PC-9 (cell line): ENCODE measurements at regions of chr1 and their contacts with region 1.

Region 1: GRCh38 chr1:23959041-23959460 is 577 bp upstream of the PNRC2 start:
- DNase-seq: peak; percentile 75 to 80
- H3K4me3 ChIP-seq: peak overlapping the region; percentile 97
- H3K27ac ChIP-seq: peak overlapping the region; percentile 91
- H3K4me1 ChIP-seq: peaks cover 48% of the 10 kb centered on the region
- H3K27me3 ChIP-seq: no peaks in the 10 kb centered on the region
- CTCF ChIP-seq: no peak

Region 2: GRCh38 chr1:23727362-23727827 is 231.7 kb before region 1 on chr1:
- CTCF ChIA-PET with region 1: no interaction called
- POLR2A ChIA-PET with region 1: interaction called, 10 read pairs
- intact Hi-C with region 1: no loop called
- DNase-seq: no peak
- H3K4me3 ChIP-seq: no peak overlapping the region
- H3K27ac ChIP-seq: no peak overlapping the region
- H3K4me1 ChIP-seq: no peaks in the 10 kb centered on the region
- H3K27me3 ChIP-seq: no peaks in the 10 kb centered on the region
- CTCF ChIP-seq: no peak

Region 3: GRCh38 chr1:23777979-23778814 is 180.9 kb before region 1 on chr1 and contains the start of gene PITHD1:
- CTCF ChIA-PET with region 1: no interaction called
- POLR2A ChIA-PET with region 1: interaction called, 22 read pairs
- intact Hi-C with region 1: loop called (anchors 5 kb)
- DNase-seq: peak; percentile 56 to 76
- H3K4me3 ChIP-seq: peak within 1 kb of the TSS; percentile 90
- H3K27ac ChIP-seq: peak within 1 kb of the TSS; percentile 81
- H3K4me1 ChIP-seq: peaks cover 29% of the 10 kb centered on the region
- H3K27me3 ChIP-seq: no peaks in the 10 kb centered on the region
- CTCF ChIP-seq: no peak
- total RNA-seq, gene PITHD1: 38.5 and 39.7 TPM in 2 replicates

Region 4: DNA sequence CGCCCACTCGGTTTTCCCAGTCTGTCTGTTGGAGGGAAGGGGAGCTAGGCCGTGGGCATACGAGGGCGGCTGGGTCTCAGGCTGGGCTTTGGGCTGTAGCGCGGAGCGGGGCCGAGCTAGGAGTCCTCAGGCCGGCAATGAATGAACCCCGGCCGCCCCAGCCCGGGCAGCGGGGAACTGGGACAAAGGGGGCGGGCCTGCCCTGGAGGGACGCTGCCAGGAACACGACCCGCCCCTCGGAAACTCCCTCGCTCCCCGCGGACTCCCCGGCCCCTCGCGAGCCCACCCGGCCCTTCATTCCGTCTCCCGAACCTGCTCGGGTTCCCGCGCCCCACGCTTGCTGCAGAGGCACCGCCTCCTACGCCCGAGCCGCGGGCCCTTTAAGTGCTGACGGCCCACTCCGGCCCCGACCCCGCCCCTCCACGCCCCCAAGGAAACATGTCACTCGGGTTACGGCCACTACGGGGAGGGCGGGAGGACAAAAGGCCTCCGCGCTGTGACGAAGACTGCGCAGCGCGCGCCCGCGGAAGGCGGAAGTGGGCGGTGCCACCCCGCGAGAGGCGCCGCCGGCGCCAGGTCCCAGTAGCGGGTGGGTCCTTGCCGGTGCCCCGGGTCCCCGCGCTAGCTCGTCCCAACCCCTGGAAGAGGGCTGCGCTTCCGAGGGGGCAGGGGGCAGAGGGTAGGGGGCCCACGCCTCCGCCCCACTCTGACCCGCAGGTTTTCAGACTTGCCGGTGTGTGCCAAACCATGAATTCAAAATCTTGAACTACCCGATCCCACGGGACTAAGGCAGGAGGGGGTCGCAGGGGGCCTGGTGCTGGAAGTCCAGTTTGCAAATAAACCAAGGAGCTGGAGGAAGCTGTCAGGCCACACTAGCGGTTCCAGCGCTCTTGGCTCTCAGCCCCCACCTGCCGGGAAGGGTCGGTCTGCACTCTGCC is 158.4 kb before region 1 on chr1 and contains the start of gene GALE:
- CTCF ChIA-PET with region 1: no interaction called
- POLR2A ChIA-PET with region 1: no interaction called
- intact Hi-C with region 1: no loop called
- DNase-seq: peak; percentile 76 to 93
- H3K4me3 ChIP-seq: peak within 1 kb of the TSS; percentile 72
- H3K27ac ChIP-seq: peak within 1 kb of the TSS; percentile 85
- H3K4me1 ChIP-seq: peaks cover 14% of the 10 kb centered on the region
- H3K27me3 ChIP-seq: no peaks in the 10 kb centered on the region
- CTCF ChIP-seq: no peak
- total RNA-seq, gene GALE: 40.5 and 45.8 TPM in 2 replicates

Region 5: DNA sequence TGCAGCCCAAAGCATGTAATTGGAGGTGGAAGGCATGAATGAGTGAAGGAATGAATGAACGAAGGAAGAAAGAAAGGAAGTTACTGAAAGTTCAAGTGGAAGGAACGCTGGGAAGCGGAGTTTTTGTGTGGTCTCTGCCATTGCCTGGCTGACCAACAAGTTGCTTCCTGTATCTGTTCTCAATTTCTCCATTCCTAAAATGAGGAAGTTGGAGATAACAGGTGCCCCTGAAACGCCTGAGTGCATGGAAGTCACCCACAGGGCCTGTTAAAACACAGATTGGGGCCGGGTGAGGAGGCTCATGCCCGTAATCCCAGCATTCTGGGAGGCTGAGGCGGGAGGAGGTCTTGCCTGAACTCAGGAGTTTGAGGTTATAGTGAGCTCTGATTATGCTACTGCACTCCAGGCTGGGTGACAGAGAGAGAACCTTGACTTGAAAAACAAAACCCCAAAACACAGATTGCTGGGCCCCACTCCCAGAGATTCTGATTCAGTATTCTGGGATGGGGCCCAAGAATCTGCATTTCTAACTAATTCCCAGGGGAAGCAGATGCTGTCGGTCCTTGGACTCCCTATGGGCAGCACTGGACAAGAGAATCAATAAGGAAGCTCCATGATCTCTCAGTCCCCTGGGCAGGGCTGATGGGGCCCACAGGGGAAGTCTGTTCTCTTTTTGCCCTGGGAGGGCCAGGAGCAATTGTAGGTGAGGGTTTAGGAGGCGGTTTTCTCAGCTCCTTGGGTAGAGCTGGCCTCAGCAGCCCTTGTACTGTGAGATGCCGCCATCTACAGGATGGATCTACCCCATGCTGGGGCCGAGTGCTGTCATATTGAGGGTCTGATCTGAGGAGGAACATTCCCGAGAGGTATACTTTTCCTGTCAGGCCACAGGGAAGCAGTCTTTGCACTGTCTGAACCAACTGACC is 42.6 kb before region 1 on chr1:
- CTCF ChIA-PET with region 1: interaction called, 14 read pairs
- POLR2A ChIA-PET with region 1: interaction called, 7 read pairs
- intact Hi-C with region 1: loop called (anchors 5 kb)
- DNase-seq: peak; percentile 60 to 74
- H3K4me3 ChIP-seq: no peak overlapping the region
- H3K27ac ChIP-seq: no peak overlapping the region
- H3K4me1 ChIP-seq: peaks cover 8% of the 10 kb centered on the region; the same call in 1 of the 2 replicates
- H3K27me3 ChIP-seq: no peaks in the 10 kb centered on the region
- CTCF ChIP-seq: peak; percentile 68

Region 6: DNA sequence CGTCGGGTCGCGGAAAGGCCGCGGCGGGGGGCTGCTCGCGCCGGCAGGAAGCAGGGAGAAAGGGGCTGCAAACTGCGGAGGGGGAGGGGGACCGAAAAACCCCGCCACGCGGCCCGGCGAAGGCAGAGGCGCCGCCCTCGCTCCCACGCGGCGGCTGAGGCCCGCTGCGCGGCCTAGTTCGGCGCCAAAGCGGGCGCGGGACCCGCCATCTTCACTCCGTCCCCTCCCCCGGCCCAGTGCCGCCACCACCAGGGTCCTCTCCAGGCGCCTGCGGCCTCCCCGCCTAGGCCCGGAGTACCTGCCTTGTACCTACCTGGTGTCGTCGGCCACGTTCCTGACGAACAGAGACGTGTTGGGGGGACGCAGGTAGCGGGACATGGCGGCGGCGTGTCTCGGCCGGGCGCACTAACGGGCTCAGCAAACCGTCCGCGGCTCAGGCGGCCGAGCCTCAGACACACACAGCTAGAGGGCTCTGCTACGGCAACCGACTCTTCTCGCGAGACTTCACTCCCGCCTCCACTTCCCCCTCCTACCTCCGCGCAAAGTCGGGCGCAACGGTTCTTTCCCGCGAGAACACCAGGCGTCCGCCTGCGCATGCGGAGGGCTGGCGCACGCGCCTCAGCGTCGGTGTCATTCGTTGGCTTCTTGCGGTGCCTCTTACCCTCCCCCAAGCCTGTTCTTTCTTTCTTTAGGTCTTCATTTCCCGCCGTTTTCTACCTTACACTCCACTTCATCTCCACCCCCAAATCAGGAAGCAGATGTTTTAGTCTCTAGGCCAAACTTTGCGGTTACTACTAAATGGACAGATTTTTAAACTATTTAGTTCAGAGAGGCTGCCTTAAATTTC is 21.1 kb after region 1 on chr1 and contains the start of gene SRSF10:
- CTCF ChIA-PET with region 1: no interaction called
- POLR2A ChIA-PET with region 1: interaction called, 8 read pairs
- intact Hi-C with region 1: loop called (anchors 2 kb)
- DNase-seq: peak; percentile 88 to 96
- H3K4me3 ChIP-seq: peak within 1 kb of the TSS; percentile 94
- H3K27ac ChIP-seq: peak within 1 kb of the TSS; percentile 97
- H3K4me1 ChIP-seq: peaks cover 45% of the 10 kb centered on the region
- H3K27me3 ChIP-seq: no peaks in the 10 kb centered on the region
- CTCF ChIP-seq: no peak
- total RNA-seq, gene SRSF10: 77.3 and 96.2 TPM in 2 replicates

Region 7: DNA sequence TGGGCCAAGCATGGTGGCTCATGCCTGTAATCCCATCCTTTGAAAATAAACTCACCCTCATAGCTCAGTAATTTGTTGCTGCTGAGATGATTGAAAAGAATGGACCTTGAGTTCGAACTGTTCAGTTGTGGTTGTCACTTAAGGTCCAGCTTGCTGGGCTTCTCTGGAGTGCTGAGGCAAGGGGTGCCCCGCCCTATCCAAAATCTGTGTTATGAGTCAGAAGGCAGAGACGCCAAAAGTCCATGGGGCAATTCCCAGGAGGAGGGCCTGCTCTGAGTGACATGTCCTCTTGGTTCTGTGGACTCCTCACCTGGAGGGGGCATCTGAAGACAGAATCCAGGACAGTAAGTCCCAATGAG is 88.0 kb after region 1 on chr1:
- CTCF ChIA-PET with region 1: interaction called, 3 read pairs
- POLR2A ChIA-PET with region 1: no interaction called
- intact Hi-C with region 1: loop called (anchors 5 kb)
- DNase-seq: peak; percentile 32 to 57
- H3K4me3 ChIP-seq: no peak overlapping the region
- H3K27ac ChIP-seq: peak overlapping the region; percentile 12
- H3K4me1 ChIP-seq: peaks cover 36% of the 10 kb centered on the region
- H3K27me3 ChIP-seq: no peaks in the 10 kb centered on the region
- CTCF ChIP-seq: no peak